Activated CD4-positive, alpha-beta T cell treated with anti-CD3 and anti-CD28 coated beads for 36 hours (primary cell): ENCODE measurements at regions of chr10 and their contacts with region 1.

Region 1: GRCh38 chr10:11165591-11166543 is 148.2 kb downstream of the CELF2 start:
- DNase-seq: peak; percentile 85
- ATAC-seq: peak; percentile 57
- H3K4me3 Mint-ChIP-seq: no peak overlapping the region
- H3K27ac Mint-ChIP-seq: peak overlapping the region; percentile 99
- H3K4me1 Mint-ChIP-seq: peaks cover 33% of the 10 kb centered on the region
- H3K27me3 Mint-ChIP-seq: no peaks in the 10 kb centered on the region

Region 2: DNA sequence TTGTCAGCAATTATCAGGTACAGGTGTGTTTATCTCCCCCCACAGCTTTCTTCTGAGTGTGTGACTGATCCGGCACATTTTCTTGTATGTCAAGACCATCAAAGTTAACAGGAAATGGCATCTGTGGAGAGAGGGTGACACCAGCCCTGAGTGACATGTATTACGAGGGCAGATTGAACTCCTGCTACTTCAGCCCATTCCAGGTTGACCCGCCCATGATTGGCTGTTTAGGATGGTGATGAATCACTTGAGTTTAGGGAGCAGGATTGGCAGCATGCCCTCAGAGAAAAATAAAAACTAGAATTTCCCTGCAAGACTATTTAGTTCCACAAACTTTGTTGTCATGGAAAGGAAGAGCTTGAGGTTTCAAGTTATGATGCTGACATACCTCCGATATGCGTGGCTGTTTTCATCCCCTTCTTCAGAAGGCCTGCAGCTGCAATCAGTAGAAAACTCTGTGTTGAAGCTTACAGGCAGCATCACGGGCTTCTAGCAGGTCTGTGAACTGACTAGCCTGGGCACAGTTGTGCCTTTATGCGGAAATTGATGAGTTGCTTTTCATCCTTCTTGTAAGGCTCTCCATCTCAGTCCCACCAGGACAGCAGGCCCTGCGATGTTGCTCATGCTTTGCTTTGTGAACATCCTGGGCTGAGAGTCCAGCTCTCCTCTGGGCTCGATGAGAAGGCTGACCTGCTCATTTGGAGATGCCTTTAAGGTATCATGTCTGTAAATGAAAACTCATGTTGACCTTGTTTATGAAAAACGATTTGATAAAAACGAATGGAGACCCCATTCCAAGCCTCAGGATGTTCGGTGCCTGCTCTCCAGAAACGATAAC is 156.2 kb before region 1 on chr10:
- CTCF ChIA-PET with region 1: interaction called, 6 read pairs
- POLR2A ChIA-PET with region 1: no interaction called
- intact Hi-C with region 1: loop called in 1 of 2 experiments (anchors 2 kb)
- DNase-seq: peak; percentile 52
- ATAC-seq: peak; percentile 77
- H3K4me3 Mint-ChIP-seq: no peak overlapping the region
- H3K27ac Mint-ChIP-seq: peak overlapping the region; percentile 43
- H3K4me1 Mint-ChIP-seq: peaks cover 38% of the 10 kb centered on the region
- H3K27me3 Mint-ChIP-seq: peaks cover 50% of the 10 kb centered on the region

Region 3: DNA sequence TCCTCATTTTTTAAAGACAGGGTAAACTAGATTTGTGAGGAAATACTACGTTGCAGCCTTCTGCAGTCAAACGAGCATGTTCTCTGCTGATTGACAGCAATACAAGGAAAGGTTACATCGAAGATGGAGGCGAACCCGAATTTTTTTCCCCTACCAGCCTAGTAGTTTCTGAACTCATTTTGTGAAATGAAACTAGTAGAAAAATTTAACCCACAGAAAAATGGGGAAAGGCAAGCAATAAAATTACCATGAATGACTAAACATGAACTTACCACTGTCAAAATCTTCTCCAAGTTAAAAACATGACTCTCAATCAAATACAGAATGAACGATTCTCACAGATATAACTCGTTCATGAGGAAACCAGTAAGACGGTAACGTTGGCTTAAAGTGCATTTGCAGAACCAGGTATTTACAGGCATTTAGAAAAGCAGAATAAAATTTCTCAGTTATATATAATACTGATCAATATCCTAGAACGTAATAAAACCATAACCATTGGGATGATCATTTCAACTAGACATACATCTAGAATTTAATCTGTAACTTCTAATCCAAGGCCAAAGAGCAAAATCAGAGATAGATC is 74.3 kb before region 1 on chr10:
- CTCF ChIA-PET with region 1: interaction called, 7 read pairs
- POLR2A ChIA-PET with region 1: no interaction called
- intact Hi-C with region 1: loop called in 1 of 2 experiments (anchors 2 kb)
- DNase-seq: peak; percentile 55
- ATAC-seq: peak; percentile 68
- H3K4me3 Mint-ChIP-seq: no peak overlapping the region
- H3K27ac Mint-ChIP-seq: no peak overlapping the region
- H3K4me1 Mint-ChIP-seq: peaks cover 23% of the 10 kb centered on the region
- H3K27me3 Mint-ChIP-seq: no peaks in the 10 kb centered on the region

Region 4: DNA sequence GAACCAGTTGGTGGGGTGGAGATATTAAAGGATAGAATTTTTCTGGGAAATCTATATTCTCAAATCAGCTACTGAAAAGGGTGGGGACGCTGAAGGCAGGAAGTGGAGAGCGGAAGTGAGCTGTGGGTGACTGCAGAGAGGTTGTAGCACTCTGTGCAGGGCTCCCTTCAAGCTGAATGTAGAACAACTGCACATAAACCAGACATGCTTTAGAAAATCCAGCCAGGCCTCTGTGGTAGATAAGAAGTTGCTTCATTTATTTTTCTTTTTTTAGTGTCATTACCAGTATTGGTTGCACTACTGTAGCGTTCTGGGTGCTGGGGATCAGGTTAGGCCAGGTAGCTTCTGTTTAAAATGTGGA is 20.4 kb before region 1 on chr10:
- CTCF ChIA-PET with region 1: interaction called, 32 read pairs
- POLR2A ChIA-PET with region 1: interaction called, 42 read pairs
- intact Hi-C with region 1: loop called (anchors 1 kb)
- DNase-seq: peak; percentile 74
- ATAC-seq: peak; percentile 78
- H3K4me3 Mint-ChIP-seq: peak overlapping the region; percentile 70
- H3K27ac Mint-ChIP-seq: peak overlapping the region; percentile 96
- H3K4me1 Mint-ChIP-seq: peaks cover 91% of the 10 kb centered on the region
- H3K27me3 Mint-ChIP-seq: no peaks in the 10 kb centered on the region

Region 5: GRCh38 chr10:11209830-11210181 is 43.9 kb after region 1 on chr10:
- CTCF ChIA-PET with region 1: interaction called, 6 read pairs
- POLR2A ChIA-PET with region 1: interaction called, 8 read pairs
- intact Hi-C with region 1: loop called in 1 of 2 experiments (anchors 5 kb)
- DNase-seq: no peak
- ATAC-seq: peak; percentile 2
- H3K4me3 Mint-ChIP-seq: peak overlapping the region; percentile 63
- H3K27ac Mint-ChIP-seq: peak overlapping the region; percentile 97
- H3K4me1 Mint-ChIP-seq: peaks cover 99% of the 10 kb centered on the region
- H3K27me3 Mint-ChIP-seq: no peaks in the 10 kb centered on the region

Region 6: GRCh38 chr10:11684717-11685645 is 519.1 kb after region 1 on chr10:
- CTCF ChIA-PET with region 1: no interaction called
- POLR2A ChIA-PET with region 1: no interaction called
- intact Hi-C with region 1: loop called in 1 of 2 experiments (anchors 1 kb)
- DNase-seq: peak; percentile 81
- ATAC-seq: peak; percentile 93
- H3K4me3 Mint-ChIP-seq: peak overlapping the region; percentile 72
- H3K27ac Mint-ChIP-seq: peak overlapping the region; percentile 94
- H3K4me1 Mint-ChIP-seq: peaks cover 49% of the 10 kb centered on the region
- H3K27me3 Mint-ChIP-seq: peaks cover 4% of the 10 kb centered on the region